Gastrocnemius medialis (tissue), 4 donors: ENCODE measurements at regions of chr9 and their contacts with region 1.

Region 1: DNA sequence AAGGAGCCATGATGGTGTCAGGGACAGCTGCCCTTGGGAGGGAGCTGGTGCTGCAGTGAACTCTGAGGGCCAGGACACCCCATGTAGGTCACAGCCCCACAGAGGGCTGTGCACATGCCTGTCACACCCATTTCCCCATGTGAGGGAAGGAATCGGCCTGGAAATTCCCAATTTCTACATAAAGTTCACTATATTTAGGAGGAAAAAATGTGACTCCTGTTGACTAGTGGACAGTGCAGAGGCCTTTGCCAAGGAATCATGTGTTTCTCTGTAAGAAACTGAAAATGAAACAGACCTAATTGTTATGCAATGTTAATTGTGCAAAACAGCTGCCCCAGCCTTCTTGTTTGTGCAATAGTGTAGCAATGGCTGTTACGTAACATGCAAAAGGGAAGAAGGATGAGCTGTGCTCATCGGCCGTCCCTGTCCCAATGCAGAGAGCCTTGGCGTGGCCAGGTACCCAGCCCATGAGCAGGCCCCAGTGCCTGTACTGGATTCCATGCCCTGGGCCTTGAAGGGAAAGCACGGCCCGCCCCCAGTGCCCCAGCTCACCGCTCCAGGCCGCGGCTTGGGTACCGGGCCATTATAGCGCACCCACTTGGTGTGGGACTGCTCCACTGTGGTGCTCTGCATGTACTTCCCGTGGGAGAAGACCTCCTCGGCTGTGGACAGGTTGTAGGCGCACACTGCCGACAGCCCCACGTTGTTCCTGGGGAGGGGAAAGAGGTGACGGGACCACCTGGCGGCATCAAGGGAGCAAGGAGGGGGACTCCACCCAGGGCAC is 70.0 kb downstream of the SECISBP2 start:
- DNase-seq: peak; percentile 85 to 94
- ATAC-seq: peak; percentile 83 to 87
- H3K4me3 ChIP-seq: no peak overlapping the region
- H3K27ac ChIP-seq: peak overlapping the region; percentile 79 to 93 (median 88)
- H3K4me1 ChIP-seq: peaks cover 20 to 26% of the 10 kb centered on the region in 2 donors
- H3K27me3 ChIP-seq: no peaks in the 10 kb centered on the region
- CTCF ChIP-seq: peak in 2 of 5 experiments; percentile 10 to 38
- POLR2A ChIP-seq: peak in 1 of 2 donors; percentile 19

Region 2: DNA sequence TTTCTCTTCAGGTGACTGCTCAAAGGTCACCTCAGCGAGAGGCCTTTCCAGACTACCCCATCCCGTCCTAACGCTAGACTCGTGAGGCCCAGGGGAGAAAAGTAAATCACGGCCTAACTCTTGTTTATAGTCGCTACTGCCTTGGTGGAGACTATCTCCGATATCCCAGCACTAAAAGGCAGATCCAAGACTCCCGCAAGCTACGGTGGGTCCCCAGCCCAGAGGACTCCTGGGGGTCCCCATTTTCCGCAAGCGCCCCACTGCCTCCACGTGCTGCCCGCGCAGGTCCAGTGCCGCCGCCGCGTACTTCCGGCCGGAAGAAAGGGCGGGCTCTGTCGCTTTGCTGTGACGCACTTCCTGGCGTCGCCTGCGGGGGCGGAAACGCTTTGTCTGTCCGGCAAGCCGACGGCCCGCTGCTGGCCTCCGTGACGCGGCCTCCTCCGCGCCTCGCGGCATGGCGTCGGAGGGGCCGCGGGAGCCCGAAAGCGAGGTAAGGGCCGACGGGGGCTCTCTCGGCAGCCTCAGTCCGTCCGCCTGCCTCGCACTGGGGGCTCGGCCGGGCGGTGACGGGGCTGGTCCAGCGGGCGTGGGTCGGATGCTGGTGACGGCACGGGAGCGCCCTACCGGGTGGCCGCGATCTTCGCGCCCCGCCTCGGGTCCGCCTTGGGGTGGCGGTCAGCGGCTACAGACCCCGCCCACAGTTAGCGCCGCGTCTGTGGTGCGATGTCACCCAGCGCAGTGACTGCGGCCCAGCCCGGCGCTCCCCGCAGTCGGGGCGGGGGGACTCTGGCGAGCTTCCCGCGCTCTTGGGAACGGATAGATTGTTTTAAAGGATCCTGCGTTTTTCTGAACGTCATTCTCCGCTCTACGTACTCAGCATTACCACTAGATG is 69.9 kb before region 1 on chr9 and contains the start of gene SECISBP2:
- in situ Hi-C with region 1: no loop called
- intact Hi-C with region 1: loop called (anchors 2 kb)
- DNase-seq: peak; percentile 92 to 95
- ATAC-seq: peak; percentile 90 to 93
- H3K4me3 ChIP-seq: peak within 1 kb of the TSS; percentile 69 to 83 (median 80)
- H3K27ac ChIP-seq: peak within 1 kb of the TSS; percentile 87 to 99 (median 98)
- H3K4me1 ChIP-seq: peaks cover 39 to 40% of the 10 kb centered on the region in 2 donors
- H3K27me3 ChIP-seq: no peaks in the 10 kb centered on the region
- CTCF ChIP-seq: peak; percentile 62 to 73 (median 66)
- POLR2A ChIP-seq: peak; percentile 96 to 97
- total RNA-seq, gene SECISBP2: 40.2 to 70.8 (median 54.9) TPM

Region 3: DNA sequence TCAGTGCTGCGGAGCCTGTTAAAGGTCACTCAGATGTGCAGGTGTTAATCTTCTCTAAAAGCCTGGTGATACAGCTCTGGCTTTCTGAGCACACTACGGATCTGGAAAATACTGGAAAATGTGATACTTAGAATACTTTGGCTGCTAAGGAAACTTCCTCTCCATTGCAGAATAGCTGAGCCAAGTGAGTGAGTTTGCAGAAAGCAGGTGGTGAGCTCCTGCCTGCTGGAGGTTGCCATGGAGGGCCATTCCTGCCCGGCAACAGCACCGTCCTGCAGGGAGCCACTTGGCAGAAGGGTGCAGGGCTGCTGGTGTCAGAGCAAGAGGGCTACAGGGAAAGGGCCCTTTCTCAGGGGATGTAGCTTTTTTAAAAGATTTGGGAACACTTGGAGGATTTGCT is 29.3 kb before region 1 on chr9:
- in situ Hi-C with region 1: no loop called
- intact Hi-C with region 1: loop called (anchors 1 kb)
- DNase-seq: peak; percentile 63 to 86
- ATAC-seq: peak; percentile 66 to 79
- H3K4me3 ChIP-seq: no peak overlapping the region
- H3K27ac ChIP-seq: peak overlapping the region; percentile 68 to 87 (median 78)
- H3K4me1 ChIP-seq: peaks cover 27 to 41% of the 10 kb centered on the region in 2 donors
- H3K27me3 ChIP-seq: no peaks in the 10 kb centered on the region
- CTCF ChIP-seq: no peak
- POLR2A ChIP-seq: no peak

Region 4: GRCh38 chr9:89410641-89411350 is 22.5 kb after region 1 on chr9:
- in situ Hi-C with region 1: no loop called
- intact Hi-C with region 1: loop called (anchors 1 kb)
- DNase-seq: no peak
- ATAC-seq: no peak
- H3K4me3 ChIP-seq: no peak overlapping the region
- H3K27ac ChIP-seq: peak overlapping the region in 1 of 4 donors; percentile 68
- H3K4me1 ChIP-seq: peaks cover 49 to 67% of the 10 kb centered on the region in 2 donors
- H3K27me3 ChIP-seq: no peaks in the 10 kb centered on the region
- CTCF ChIP-seq: no peak
- POLR2A ChIP-seq: no peak

Region 5: DNA sequence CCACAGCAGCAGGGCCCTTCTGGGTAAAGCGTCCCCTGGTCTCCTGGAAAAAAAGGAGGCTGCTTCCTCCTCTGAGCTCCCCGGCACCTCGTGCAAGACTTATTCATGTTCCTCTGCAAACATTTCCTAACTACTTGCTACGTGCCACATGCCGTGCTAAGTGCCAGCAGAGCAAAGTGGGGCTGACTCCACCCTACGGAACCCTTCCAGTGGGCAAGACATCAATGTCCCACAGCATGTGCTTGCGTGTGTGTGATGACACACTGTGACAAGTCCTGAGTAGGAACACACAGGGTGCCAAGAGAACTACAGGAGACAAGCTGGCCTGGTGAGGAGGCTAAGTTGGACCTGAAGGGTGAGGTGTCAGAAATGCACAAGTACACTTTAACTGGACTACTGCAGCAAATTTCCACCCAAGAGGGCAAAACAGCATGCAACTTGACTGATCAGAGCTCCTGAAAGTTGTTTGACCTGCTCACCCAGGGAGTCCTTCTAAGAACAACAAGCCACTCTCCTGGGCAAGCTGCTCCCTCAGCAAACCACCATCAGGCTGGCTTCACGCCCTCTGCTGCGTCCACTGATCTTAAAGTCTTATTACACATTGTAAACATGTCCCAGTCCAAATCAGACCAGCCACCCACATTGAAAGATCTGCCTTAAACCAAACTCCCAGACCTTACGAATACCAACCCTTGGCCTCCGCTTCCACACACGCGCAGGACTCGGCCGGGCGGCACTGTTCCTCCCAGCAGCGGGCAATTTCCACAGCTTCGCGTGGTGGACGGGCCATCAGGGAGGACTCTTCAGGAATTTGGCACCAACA is 52.5 kb after region 1 on chr9:
- in situ Hi-C with region 1: no loop called
- intact Hi-C with region 1: loop called (anchors 1 kb)
- DNase-seq: peak; percentile 93 to 98
- ATAC-seq: peak; percentile 94 to 95
- H3K4me3 ChIP-seq: no peak overlapping the region
- H3K27ac ChIP-seq: peak overlapping the region; percentile 83 to 88 (median 85)
- H3K4me1 ChIP-seq: peaks cover 42 to 55% of the 10 kb centered on the region in 2 donors
- H3K27me3 ChIP-seq: no peaks in the 10 kb centered on the region
- CTCF ChIP-seq: no peak
- POLR2A ChIP-seq: peak; percentile 58 to 71

Region 6: GRCh38 chr9:89497978-89498851 is 109.9 kb after region 1 on chr9 and contains the start of gene SEMA4D:
- in situ Hi-C with region 1: no loop called
- intact Hi-C with region 1: loop called (anchors 5 kb)
- DNase-seq: peak; percentile 76 to 79
- ATAC-seq: peak; percentile 78 to 84
- H3K4me3 ChIP-seq: peak within 1 kb of the TSS; percentile 66 to 92 (median 78)
- H3K27ac ChIP-seq: peak within 1 kb of the TSS; percentile 85 to 96 (median 90)
- H3K4me1 ChIP-seq: peaks cover 25 to 37% of the 10 kb centered on the region in 2 donors
- H3K27me3 ChIP-seq: no peaks in the 10 kb centered on the region
- CTCF ChIP-seq: no peak
- POLR2A ChIP-seq: peak; percentile 7 to 47
- total RNA-seq, gene SEMA4D: 23.6 to 77.0 (median 41.3) TPM

Region 7: GRCh38 chr9:89576404-89576839 is 188.1 kb after region 1 on chr9:
- in situ Hi-C with region 1: no loop called
- intact Hi-C with region 1: no loop called
- DNase-seq: no peak
- ATAC-seq: no peak
- H3K4me3 ChIP-seq: no peak overlapping the region
- H3K27ac ChIP-seq: no peak overlapping the region
- H3K4me1 ChIP-seq: no peaks in the 10 kb centered on the region
- H3K27me3 ChIP-seq: peaks cover 0 to 2% (median 0%) of the 10 kb centered on the region in 3 donors
- CTCF ChIP-seq: peak; percentile 63 to 77 (median 70)
- POLR2A ChIP-seq: no peak